Mammary epithelial cell (primary cell): ENCODE measurements at regions of chr7 and their contacts with region 1.

Region 1: DNA sequence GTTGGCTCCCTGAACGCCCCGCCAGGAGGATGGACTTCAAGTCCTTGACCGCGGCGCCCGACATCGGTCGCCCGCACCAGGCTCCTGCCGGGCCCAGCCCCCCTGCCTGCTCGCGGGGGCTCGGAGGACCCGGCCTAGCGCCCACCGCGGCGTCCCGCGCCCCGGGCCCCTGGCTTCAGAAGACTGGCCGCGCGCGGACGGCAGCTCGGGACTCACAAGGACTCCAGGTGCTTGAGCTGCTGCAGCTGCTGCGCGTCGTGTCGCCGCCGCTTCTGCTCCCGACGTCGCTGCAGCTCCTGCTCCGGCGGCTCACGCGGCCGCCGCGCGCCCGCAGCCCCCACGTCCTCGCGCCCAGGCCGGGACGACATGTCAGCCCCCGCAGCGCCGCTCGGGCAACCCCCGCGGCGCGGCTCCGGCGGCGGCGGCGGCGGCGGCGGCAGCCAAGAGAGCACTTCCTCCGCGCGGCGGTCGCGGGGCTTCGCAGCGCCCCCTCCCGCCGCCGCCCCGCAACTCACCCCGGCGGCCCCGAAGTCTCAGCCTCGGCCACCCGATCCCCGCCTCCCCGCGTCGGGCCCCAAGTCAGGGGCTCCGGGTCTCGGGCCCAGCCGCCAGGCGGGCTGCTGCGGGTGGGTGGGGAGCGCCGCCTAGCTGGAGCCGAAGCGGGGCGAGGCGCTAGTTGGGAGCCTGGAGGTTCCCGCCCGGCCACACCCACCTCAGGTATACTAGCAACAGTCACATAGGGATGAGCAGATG is at the start of gene RP9:
- DNase-seq: peak; percentile 60
- H3K4me3 ChIP-seq: peak within 1 kb of the TSS; percentile 73 to 95 (median 85)
- H3K27ac ChIP-seq: peak within 1 kb of the TSS; percentile 66
- H3K4me1 ChIP-seq: peaks cover 18% of the 10 kb centered on the region
- H3K27me3 ChIP-seq: no peaks in the 10 kb centered on the region
- CTCF ChIP-seq: peak in 1 of 2 donors; percentile 49
- total RNA-seq, gene RP9: 7.2 to 17.1 TPM

Region 2: GRCh38 chr7:32490127-32490822 is 618.9 kb before region 1 on chr7 and contains the start of gene LSM5:
- CTCF ChIA-PET with region 1: no interaction called
- dilution Hi-C with region 1: no loop called
- in situ Hi-C with region 1: no loop called
- intact Hi-C with region 1: loop called (anchors 5 kb)
- DNase-seq: peak; percentile 92
- H3K4me3 ChIP-seq: peak within 1 kb of the TSS; percentile 58 to 99 (median 73)
- H3K27ac ChIP-seq: peak within 1 kb of the TSS; percentile 59
- H3K4me1 ChIP-seq: peaks cover 6% of the 10 kb centered on the region
- H3K27me3 ChIP-seq: no peaks in the 10 kb centered on the region
- CTCF ChIP-seq: no peak
- total RNA-seq, gene LSM5: 15.7 to 55.6 TPM

Region 3: GRCh38 chr7:32765185-32765584 is 344.0 kb before region 1 on chr7:
- CTCF ChIA-PET with region 1: interaction called, 5 read pairs
- dilution Hi-C with region 1: no loop called
- in situ Hi-C with region 1: no loop called
- intact Hi-C with region 1: loop called (anchors 5 kb)
- DNase-seq: no peak
- H3K4me3 ChIP-seq: no peak overlapping the region
- H3K27ac ChIP-seq: no peak overlapping the region
- H3K4me1 ChIP-seq: no peaks in the 10 kb centered on the region
- H3K27me3 ChIP-seq: no peaks in the 10 kb centered on the region
- CTCF ChIP-seq: no peak

Region 4: DNA sequence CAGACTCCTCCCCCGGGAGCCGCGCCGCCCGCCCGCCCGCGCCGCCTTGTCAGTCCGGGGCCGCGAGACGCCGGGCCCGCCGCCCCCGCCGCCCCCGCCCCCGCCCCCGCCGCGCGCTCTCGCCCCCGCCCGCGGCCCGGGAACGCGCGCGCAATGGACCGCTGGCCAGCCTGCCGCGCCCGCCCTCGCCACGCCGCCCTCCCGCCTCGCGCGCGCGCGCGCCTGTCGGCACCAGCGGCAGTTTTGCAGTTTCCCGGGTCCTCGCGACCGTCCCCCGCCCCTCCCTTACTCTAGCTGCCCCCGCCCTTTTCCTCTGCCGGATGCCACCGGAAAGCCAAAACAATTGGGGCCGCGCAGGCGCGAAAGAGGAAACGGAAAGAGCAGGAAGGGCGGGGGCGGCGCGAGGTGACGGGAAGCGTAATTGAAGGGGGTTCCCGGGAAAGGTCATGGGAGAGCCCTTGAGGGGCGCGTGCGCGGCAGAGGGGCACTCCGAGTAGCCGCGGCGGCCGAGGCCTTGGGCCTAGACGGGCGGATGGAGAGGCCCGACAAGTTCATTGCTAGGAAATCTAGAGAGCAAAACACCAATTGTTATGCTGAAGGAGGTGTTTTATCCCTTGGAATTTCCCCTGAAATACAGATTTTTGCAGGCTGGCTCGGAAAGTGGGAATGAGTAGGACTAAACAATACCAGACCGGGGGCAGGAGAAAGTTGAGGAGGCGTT is 217.2 kb before region 1 on chr7:
- CTCF ChIA-PET with region 1: no interaction called
- dilution Hi-C with region 1: no loop called
- in situ Hi-C with region 1: no loop called
- intact Hi-C with region 1: loop called (anchors 5 kb)
- DNase-seq: peak; percentile 95
- H3K4me3 ChIP-seq: peak overlapping the region; percentile 85 to 91 (median 85)
- H3K27ac ChIP-seq: peak overlapping the region; percentile 96
- H3K4me1 ChIP-seq: peaks cover 24% of the 10 kb centered on the region
- H3K27me3 ChIP-seq: no peaks in the 10 kb centered on the region
- CTCF ChIP-seq: no peak

Region 5: DNA sequence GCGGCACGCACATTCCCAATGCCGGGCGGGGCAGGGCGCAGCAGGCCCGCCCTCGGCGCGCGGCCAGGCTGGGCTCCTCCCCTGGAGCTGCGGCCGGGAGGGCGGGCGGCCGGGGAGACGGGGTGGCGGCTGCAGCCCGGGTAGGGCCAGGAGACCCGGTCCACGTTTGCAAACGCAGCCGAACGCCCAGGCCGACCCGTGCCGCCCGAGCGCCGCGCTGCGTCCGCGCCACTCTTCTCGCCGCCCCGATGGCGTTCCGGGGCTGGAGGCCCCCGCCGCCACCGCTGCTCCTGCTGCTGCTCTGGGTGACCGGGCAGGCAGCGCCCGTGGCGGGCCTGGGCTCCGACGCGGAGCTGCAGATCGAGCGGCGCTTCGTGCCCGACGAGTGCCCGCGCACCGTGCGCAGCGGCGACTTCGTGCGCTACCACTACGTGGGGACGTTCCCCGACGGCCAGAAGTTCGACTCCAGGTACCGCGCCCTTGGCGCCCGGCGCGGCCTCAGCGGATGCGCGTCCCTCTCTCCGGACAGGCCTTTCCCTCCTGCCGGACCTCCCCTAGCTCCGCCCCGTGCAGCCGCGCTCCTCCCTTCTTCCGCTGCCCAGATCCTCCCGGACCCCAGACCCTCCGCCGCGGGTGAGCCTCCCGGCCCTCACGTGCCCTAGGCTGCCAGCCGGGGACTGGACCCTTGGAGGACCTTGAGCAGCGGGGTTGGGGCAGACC is 151.7 kb before region 1 on chr7 and contains the start of gene FKBP9:
- CTCF ChIA-PET with region 1: no interaction called
- dilution Hi-C with region 1: no loop called
- in situ Hi-C with region 1: no loop called
- intact Hi-C with region 1: loop called (anchors 5 kb)
- DNase-seq: peak; percentile 79
- H3K4me3 ChIP-seq: peak within 1 kb of the TSS; percentile 61 to 74 (median 70)
- H3K27ac ChIP-seq: peak within 1 kb of the TSS; percentile 74
- H3K4me1 ChIP-seq: peaks cover 3% of the 10 kb centered on the region
- H3K27me3 ChIP-seq: no peaks in the 10 kb centered on the region
- CTCF ChIP-seq: no peak
- total RNA-seq, gene FKBP9: 129 to 301 TPM

Region 6: DNA sequence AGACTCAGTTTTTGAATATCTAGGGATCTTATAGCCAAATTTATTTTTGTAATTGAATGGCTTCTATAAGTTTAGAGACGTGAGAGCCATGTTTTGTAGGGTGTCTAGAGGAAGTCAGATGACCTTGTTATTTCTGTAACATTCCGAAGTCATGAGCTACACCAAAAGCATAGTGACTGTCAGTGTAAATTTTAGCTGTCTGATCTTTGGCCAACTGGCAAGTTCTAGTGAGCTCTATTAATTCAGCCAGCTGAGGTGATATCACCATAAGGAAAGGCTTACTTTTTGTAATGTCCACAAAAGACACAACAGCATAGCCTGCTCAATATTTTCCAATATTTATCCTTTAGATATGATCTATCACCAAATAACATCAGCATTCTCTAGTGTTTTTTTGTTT is 36.7 kb before region 1 on chr7:
- CTCF ChIA-PET with region 1: interaction called, 3 read pairs
- dilution Hi-C with region 1: no loop called
- in situ Hi-C with region 1: no loop called
- intact Hi-C with region 1: loop called (anchors 2 kb)
- DNase-seq: peak; percentile 35
- H3K4me3 ChIP-seq: no peak overlapping the region
- H3K27ac ChIP-seq: no peak overlapping the region
- H3K4me1 ChIP-seq: peaks cover 4% of the 10 kb centered on the region
- H3K27me3 ChIP-seq: no peaks in the 10 kb centered on the region
- CTCF ChIP-seq: no peak

Region 7: GRCh38 chr7:33091111-33091531 is 18.1 kb before region 1 on chr7:
- CTCF ChIA-PET with region 1: no interaction called
- dilution Hi-C with region 1: no loop called
- in situ Hi-C with region 1: no loop called
- intact Hi-C with region 1: no loop called
- DNase-seq: peak; percentile 9
- H3K4me3 ChIP-seq: no peak overlapping the region
- H3K27ac ChIP-seq: no peak overlapping the region
- H3K4me1 ChIP-seq: no peaks in the 10 kb centered on the region
- H3K27me3 ChIP-seq: no peaks in the 10 kb centered on the region
- CTCF ChIP-seq: no peak